Activated B cell treated with CpG ODN at 0.5 μM for 24 hours (primary cell): ENCODE measurements at regions of chr5 and their contacts with region 1.

Region 1: DNA sequence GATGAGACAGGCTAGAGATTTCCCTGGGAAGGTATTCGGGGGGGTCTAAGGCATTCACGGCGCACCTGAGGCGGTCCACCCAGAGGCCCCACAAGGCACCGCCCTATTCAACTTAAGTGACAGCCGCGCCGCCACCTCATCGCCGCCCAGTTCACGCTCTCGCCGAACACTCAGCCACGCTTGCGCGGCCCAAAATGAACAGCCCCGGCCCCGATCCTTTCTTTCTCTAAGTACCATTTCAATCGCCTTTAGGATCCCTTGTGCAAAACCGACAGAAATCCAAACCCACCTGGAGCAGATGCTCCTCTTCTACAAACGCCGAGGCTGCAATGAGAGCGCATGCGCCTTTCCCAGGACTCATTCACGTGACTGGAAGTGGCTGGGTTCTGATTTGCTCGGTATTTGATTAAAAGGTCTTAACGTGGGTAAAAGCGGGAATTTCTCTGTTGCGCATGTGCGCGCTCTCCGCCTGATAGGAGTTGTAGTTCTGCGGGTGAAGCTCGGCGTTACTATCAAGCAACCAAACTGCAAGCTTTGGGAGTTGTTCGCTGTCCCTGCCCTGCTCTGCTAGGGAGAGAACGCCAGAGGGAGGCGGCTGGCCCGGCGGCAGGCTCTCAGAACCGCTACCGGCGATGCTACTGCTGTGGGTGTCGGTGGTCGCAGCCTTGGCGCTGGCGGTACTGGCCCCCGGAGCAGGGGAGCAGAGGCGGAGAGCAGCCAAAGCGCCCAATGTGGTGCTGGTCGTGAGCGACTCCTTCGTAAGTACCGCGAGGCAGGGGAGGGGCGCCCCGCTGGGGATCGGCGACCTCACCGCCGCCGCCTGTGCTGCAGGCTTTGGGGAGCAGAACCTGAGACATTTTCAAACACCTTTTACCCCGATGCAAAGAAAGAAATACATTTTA is at the starts of genes ARSK and SKIC3:
- DNase-seq: peak; percentile 80
- ATAC-seq: peak; percentile 86
- H3K4me3 Mint-ChIP-seq: peak within 1 kb of the TSS; percentile 95
- H3K27ac Mint-ChIP-seq: peak within 1 kb of the TSS; percentile 92
- H3K4me1 Mint-ChIP-seq: peaks cover 43% of the 10 kb centered on the region
- H3K27me3 Mint-ChIP-seq: no peaks in the 10 kb centered on the region
- CTCF ChIP-seq: no peak
- total RNA-seq, gene ARSK: 2.3 and 2.9 TPM in 2 replicates
- total RNA-seq, gene SKIC3: 67.4 and 78.7 TPM in 2 replicates

Region 2: GRCh38 chr5:94618493-94619328 is 936.2 kb before region 1 on chr5 and contains the starts of genes KIAA0825 and SLF1:
- CTCF ChIA-PET with region 1: no interaction called
- POLR2A ChIA-PET with region 1: no interaction called
- intact Hi-C with region 1: loop called (anchors 10 kb)
- DNase-seq: peak; percentile 70
- ATAC-seq: peak; percentile 94
- H3K4me3 Mint-ChIP-seq: peak within 1 kb of the TSS; percentile 96
- H3K27ac Mint-ChIP-seq: peak within 1 kb of the TSS; percentile 82
- H3K4me1 Mint-ChIP-seq: peaks cover 22% of the 10 kb centered on the region
- H3K27me3 Mint-ChIP-seq: no peaks in the 10 kb centered on the region
- CTCF ChIP-seq: no peak
- total RNA-seq, gene KIAA0825: 1.4 and 2.3 TPM in 2 replicates
- total RNA-seq, gene SLF1: 7.3 and 12.0 TPM in 2 replicates

Region 3: DNA sequence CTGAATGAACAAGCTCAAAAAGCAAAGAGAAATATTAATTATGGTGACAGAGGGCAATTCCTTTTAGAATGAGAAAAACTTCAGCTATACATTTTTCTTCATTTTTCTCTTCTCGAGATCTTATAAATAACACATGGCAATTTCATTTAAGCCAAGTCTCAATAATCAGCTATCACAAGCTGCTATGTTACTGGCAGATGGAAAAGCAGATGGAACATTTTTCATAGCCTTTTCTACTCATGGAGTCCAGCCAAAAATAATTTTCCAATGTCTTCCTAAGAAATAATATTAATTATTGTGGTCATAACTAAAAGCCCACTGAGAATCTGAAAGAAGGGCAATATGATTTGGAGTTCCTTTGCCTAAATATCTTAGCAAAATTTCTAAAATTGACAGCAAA is 35.7 kb before region 1 on chr5:
- CTCF ChIA-PET with region 1: no interaction called
- POLR2A ChIA-PET with region 1: no interaction called
- intact Hi-C with region 1: no loop called
- DNase-seq: no peak
- ATAC-seq: no peak
- H3K4me3 Mint-ChIP-seq: no peak overlapping the region
- H3K27ac Mint-ChIP-seq: no peak overlapping the region
- H3K4me1 Mint-ChIP-seq: no peaks in the 10 kb centered on the region
- H3K27me3 Mint-ChIP-seq: no peaks in the 10 kb centered on the region
- CTCF ChIP-seq: no peak

Region 4: GRCh38 chr5:95730730-95731570 is 176.1 kb after region 1 on chr5 and contains the start of gene RHOBTB3:
- CTCF ChIA-PET with region 1: no interaction called
- POLR2A ChIA-PET with region 1: no interaction called
- intact Hi-C with region 1: loop called (anchors 1 kb)
- DNase-seq: peak; percentile 52
- ATAC-seq: peak; percentile 73
- H3K4me3 Mint-ChIP-seq: peak within 1 kb of the TSS; percentile 87
- H3K27ac Mint-ChIP-seq: peak within 1 kb of the TSS; percentile 61
- H3K4me1 Mint-ChIP-seq: peaks cover 34% of the 10 kb centered on the region
- H3K27me3 Mint-ChIP-seq: peaks cover 18% of the 10 kb centered on the region
- CTCF ChIP-seq: no peak
- total RNA-seq, gene RHOBTB3: 3.3 and 5.0 TPM in 2 replicates

Region 5: GRCh38 chr5:95808686-95809413 is 254.0 kb after region 1 on chr5:
- CTCF ChIA-PET with region 1: no interaction called
- POLR2A ChIA-PET with region 1: no interaction called
- intact Hi-C with region 1: loop called (anchors 10 kb)
- DNase-seq: peak; percentile 72
- ATAC-seq: peak; percentile 99
- H3K4me3 Mint-ChIP-seq: peak overlapping the region; percentile 77
- H3K27ac Mint-ChIP-seq: peak overlapping the region; percentile 95
- H3K4me1 Mint-ChIP-seq: peaks cover 56% of the 10 kb centered on the region
- H3K27me3 Mint-ChIP-seq: no peaks in the 10 kb centered on the region
- CTCF ChIP-seq: no peak

Region 6: GRCh38 chr5:96662725-96663513 is 1108.0 kb after region 1 on chr5:
- CTCF ChIA-PET with region 1: no interaction called
- POLR2A ChIA-PET with region 1: interaction called, 3 read pairs
- intact Hi-C with region 1: loop called (anchors 2 kb)
- DNase-seq: peak; percentile 89
- ATAC-seq: peak; percentile 72
- H3K4me3 Mint-ChIP-seq: peak overlapping the region; percentile 98
- H3K27ac Mint-ChIP-seq: peak overlapping the region; percentile 98
- H3K4me1 Mint-ChIP-seq: peaks cover 51% of the 10 kb centered on the region
- H3K27me3 Mint-ChIP-seq: no peaks in the 10 kb centered on the region
- CTCF ChIP-seq: no peak